Adrenal gland (tissue), 19 donors: ENCODE measurements at regions of chr18 and their contacts with region 1.

Region 1: GRCh38 chr18:59697236-59697932 is at the start of gene CCBE1:
- DNase-seq: peak; percentile 69 to 84 (median 81)
- H3K4me3 ChIP-seq: peak within 1 kb of the TSS; percentile 13 to 76 (median 36)
- H3K27ac ChIP-seq: peak within 1 kb of the TSS in 4 of 5 donors; percentile 25 to 65 (median 58)
- H3K4me1 ChIP-seq: peaks cover 10 to 31% of the 10 kb centered on the region in 2 donors
- H3K27me3 ChIP-seq: no peaks in the 10 kb centered on the region
- CTCF ChIP-seq: peak; percentile 83 to 97 (median 88)
- POLR2A ChIP-seq: peak in 1 of 2 donors; percentile 37
- total RNA-seq, gene CCBE1: 4.8 to 56.8 (median 33.0) TPM

Region 2: DNA sequence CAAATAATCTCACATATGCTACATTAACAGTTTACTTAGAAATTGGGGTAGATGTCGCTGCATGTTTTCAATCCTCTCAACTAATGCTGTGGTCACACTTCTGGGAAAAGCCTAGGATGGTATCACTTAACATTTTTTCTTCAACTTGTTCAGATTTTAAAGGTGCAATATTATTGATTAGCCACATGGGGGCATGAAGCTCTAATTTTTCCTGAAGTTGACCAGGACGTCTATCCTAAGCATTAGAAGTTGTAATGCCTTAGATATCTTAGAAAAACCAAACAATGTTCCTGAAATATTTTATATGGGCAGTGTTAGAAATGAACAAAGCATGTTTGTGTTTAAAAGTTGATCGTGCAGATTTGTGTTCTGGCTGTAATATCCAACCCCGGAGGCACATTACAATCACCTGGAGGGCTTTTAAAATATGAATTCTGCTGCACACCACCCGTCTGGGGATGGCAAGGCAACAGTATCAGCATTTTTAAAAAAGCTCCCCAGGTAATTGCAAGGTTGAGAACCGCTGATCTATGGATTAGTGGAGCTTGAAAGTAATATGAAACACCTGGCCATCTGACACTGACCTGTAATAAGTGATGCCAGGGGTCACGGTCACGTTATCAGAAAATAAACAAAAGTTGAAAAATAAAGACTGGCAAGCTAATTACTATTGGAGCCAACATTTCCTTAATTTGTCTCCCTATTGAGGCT is 237.9 kb before region 1 on chr18:
- intact Hi-C with region 1: loop called (anchors 10 kb)
- DNase-seq: no peak
- H3K4me3 ChIP-seq: no peak overlapping the region
- H3K27ac ChIP-seq: no peak overlapping the region
- H3K4me1 ChIP-seq: peaks cover 0 to 8% of the 10 kb centered on the region in 2 donors
- H3K27me3 ChIP-seq: no peaks in the 10 kb centered on the region
- CTCF ChIP-seq: peak; percentile 54 to 75 (median 67)
- POLR2A ChIP-seq: no peak

Region 3: GRCh38 chr18:59623456-59624368 is 73.7 kb before region 1 on chr18:
- intact Hi-C with region 1: loop called in 1 of 2 experiments (anchors 10 kb)
- DNase-seq: peak in 6 of 7 donors; percentile 47 to 67 (median 50)
- H3K4me3 ChIP-seq: peak overlapping the region in 1 of 4 donors; percentile 8
- H3K27ac ChIP-seq: peak overlapping the region; percentile 4 to 78 (median 63)
- H3K4me1 ChIP-seq: peaks cover 18 to 20% of the 10 kb centered on the region in 2 donors
- H3K27me3 ChIP-seq: no peaks in the 10 kb centered on the region
- CTCF ChIP-seq: peak in 1 of 6 experiments; percentile 24
- POLR2A ChIP-seq: peak in 1 of 2 donors; percentile 32

Region 4: DNA sequence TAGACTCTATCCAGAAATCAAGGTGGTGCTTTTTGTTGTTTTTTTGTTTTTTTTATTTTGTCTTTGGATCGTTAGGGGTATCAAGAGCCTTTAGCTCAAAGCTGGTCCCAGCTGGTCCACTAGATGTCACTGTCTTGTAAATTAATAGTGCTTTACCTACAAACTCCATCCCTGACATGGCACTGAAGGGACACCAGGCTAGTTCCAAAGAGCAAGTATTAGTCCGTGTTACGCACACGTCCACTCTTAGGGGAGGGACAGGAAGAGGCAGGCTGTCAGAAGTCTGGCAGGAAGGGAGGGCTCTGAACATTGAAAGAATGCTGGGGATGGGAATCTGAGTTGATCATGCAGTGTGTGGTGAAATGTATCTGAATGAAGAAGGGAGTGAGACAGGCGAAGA is 85.8 kb after region 1 on chr18:
- intact Hi-C with region 1: loop called in 1 of 2 experiments (anchors 10 kb)
- DNase-seq: peak; percentile 33 to 83 (median 62)
- H3K4me3 ChIP-seq: no peak overlapping the region
- H3K27ac ChIP-seq: no peak overlapping the region
- H3K4me1 ChIP-seq: peaks cover 14 to 30% of the 10 kb centered on the region in 2 donors
- H3K27me3 ChIP-seq: no peaks in the 10 kb centered on the region
- CTCF ChIP-seq: peak; percentile 35 to 71 (median 56)
- POLR2A ChIP-seq: no peak

Region 5: GRCh38 chr18:59823596-59824195 is 126.3 kb after region 1 on chr18:
- intact Hi-C with region 1: loop called in 1 of 2 experiments (anchors 5 kb)
- DNase-seq: peak; percentile 81 to 93 (median 84)
- H3K4me3 ChIP-seq: no peak overlapping the region
- H3K27ac ChIP-seq: no peak overlapping the region
- H3K4me1 ChIP-seq: peaks cover 0 to 6% of the 10 kb centered on the region in 2 donors
- H3K27me3 ChIP-seq: no peaks in the 10 kb centered on the region
- CTCF ChIP-seq: peak; percentile 81 to 93 (median 91)
- POLR2A ChIP-seq: no peak